Aorta (tissue), 5 donors: ENCODE measurements at regions of chr20 and their contacts with region 1.

Region 1: GRCh38 chr20:49132995-49133478 is 55.1 kb downstream of the STAU1 start:
- DNase-seq: no peak
- ATAC-seq: peak; percentile 81
- H3K4me3 ChIP-seq: no peak overlapping the region
- H3K27ac ChIP-seq: peak overlapping the region in 1 of 2 donors; percentile 2
- H3K4me1 ChIP-seq: no peaks in the 10 kb centered on the region
- H3K27me3 ChIP-seq: no peaks in the 10 kb centered on the region

Region 2: DNA sequence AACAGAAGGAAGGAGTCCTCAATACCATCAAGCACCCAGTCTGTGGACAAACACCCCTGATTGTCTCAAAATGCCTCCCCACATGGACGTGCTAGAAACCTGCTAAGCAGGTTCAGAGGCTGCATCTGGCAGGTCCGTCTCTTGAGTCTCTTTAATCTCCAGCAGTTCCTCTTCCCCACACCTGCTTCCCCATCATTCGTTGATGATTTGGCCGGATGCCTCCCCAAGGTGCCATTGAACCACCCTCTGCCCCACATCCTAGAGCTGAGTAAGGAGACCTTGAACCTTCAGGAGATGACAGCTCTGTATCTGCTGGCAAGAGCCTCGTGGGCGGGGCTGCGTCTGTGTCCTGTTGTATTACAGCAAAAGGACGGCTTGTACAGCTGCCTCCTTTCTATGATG is 484.5 kb before region 1 on chr20:
- intact Hi-C with region 1: no loop called
- DNase-seq: no peak
- ATAC-seq: no peak
- H3K4me3 ChIP-seq: no peak overlapping the region
- H3K27ac ChIP-seq: no peak overlapping the region
- H3K4me1 ChIP-seq: no peaks in the 10 kb centered on the region
- H3K27me3 ChIP-seq: no peaks in the 10 kb centered on the region

Region 3: GRCh38 chr20:49028684-49029083 is 104.4 kb before region 1 on chr20:
- intact Hi-C with region 1: no loop called
- DNase-seq: no peak
- ATAC-seq: no peak
- H3K4me3 ChIP-seq: no peak overlapping the region
- H3K27ac ChIP-seq: peak overlapping the region in 1 of 2 donors; percentile 73
- H3K4me1 ChIP-seq: no peaks in the 10 kb centered on the region
- H3K27me3 ChIP-seq: no peaks in the 10 kb centered on the region

Region 4: GRCh38 chr20:49186535-49187329 is 53.7 kb after region 1 on chr20:
- intact Hi-C with region 1: loop called in 1 of 2 experiments (anchors 10 kb)
- DNase-seq: peak; percentile 69 to 71
- ATAC-seq: no peak
- H3K4me3 ChIP-seq: peak overlapping the region; percentile 95 to 98
- H3K27ac ChIP-seq: peak overlapping the region; percentile 55 to 67
- H3K4me1 ChIP-seq: no peaks in the 10 kb centered on the region
- H3K27me3 ChIP-seq: no peaks in the 10 kb centered on the region

Region 5: DNA sequence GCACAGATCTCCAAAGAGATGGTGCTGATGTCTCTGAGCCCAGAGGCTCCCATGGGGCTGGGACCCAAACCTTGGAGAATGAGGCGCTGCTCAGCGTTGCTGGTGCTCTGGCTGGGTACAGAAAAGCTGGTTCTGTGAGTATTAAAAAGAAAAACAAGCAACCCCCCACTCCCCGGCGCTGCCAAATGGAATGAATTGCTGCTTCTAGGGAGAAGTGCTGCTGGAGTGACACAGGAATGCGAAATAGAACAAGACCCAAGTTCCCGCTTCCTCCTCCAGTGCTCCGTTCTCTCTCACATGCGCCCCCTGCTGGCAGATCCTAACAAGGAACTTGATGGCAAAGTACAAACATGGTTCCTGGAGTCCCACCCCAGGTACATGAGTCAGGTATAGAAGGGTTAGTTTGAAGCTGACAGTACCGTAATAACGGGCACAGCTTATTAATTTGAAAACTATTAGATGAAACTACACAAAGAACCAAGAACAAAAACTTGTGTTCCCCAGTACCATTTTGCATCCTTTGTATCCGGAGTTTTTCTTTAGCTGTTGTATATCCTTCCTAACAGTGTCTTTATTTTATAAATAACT is 84.0 kb after region 1 on chr20:
- intact Hi-C with region 1: loop called (anchors 1 to 2 kb)
- DNase-seq: peak; percentile 95 to 99
- ATAC-seq: peak; percentile 71
- H3K4me3 ChIP-seq: no peak overlapping the region
- H3K27ac ChIP-seq: no peak overlapping the region
- H3K4me1 ChIP-seq: peaks cover 0 to 2% of the 10 kb centered on the region in 2 donors
- H3K27me3 ChIP-seq: no peaks in the 10 kb centered on the region